Naive thymus-derived CD8-positive, alpha-beta T cell (primary cell): ENCODE measurements at regions of chr6 and their contacts with region 1.

Region 1: GRCh38 chr6:2971420-2972218 is at the start of gene SERPINB6:
- DNase-seq: peak; percentile 17 to 75 (median 40)
- ATAC-seq: peak; percentile 69 to 74
- H3K4me3 Mint-ChIP-seq: peak within 1 kb of the TSS; percentile 84 to 94 (median 92)
- H3K27ac Mint-ChIP-seq: peak within 1 kb of the TSS; percentile 87 to 97 (median 94)
- H3K4me1 Mint-ChIP-seq: peaks cover 24 to 60% (median 43%) of the 10 kb centered on the region in 4 donors
- H3K27me3 Mint-ChIP-seq: peaks cover 0 to 10% (median 0%) of the 10 kb centered on the region in 5 donors
- polyA plus RNA-seq, gene SERPINB6: 128 to 152 (median 141) TPM

Region 2: DNA sequence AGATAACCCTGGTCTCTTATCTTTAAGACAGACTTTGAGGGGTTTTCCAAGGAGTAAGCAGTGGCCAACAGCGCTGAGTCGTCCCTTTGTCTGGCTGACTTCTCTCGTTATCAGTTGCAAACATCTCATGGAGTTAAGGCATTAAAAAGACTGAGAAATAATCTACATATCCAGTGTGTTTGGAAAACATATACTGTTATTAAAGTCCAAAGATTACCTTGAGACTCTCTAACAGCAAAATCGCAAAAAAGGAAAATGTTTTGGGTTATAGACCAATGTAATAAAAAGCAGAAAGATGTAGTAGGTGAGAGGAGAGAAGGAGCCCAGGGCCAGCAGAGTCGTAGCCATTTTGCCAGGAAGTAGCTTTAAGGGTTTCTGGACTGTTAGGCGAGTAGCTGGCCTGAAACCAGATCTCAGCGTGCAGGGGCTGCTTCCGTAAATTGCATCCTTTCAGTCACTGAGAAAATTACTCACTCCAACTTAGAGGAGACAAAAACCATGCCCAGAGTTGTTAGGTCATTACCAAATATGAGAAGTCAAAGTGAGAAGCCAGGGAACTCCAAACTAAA is 245.5 kb before region 1 on chr6:
- POLR2A ChIA-PET with region 1: no interaction called
- DNase-seq: no peak
- ATAC-seq: no peak
- H3K4me3 Mint-ChIP-seq: no peak overlapping the region
- H3K27ac Mint-ChIP-seq: no peak overlapping the region
- H3K4me1 Mint-ChIP-seq: peaks cover 0 to 9% (median 1%) of the 10 kb centered on the region in 4 donors
- H3K27me3 Mint-ChIP-seq: peaks cover 1 to 19% (median 10%) of the 10 kb centered on the region in 5 donors

Region 3: DNA sequence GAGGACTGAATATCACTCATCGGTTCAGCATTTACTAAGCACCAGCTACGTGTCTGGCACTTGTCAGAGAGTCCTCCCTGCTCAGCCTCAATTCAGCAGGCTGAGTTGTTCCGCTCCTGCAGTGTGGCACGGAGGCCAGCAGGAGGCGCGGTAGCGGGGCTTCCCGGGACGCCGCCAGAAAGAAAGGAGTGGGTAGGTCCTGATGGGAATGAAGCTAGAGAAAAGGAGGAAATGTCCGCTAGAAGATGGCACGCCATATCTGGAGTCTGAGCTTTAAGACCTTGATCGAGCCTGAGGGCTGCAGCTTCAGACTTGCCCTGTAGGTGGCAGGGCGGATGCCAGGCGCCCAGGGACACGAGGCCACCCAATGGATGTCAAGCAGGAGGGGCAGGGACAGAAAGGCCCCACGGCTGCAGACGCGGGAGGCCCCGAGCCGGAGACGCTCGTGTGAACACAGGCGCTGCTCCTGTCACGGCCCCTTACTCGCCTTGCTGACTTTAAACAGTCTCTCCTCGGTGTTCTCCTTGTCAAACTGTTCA is 19.0 kb before region 1 on chr6:
- POLR2A ChIA-PET with region 1: interaction called, 12 read pairs
- DNase-seq: peak in 5 of 10 donors; percentile 30 to 63 (median 43)
- ATAC-seq: peak; percentile 67 to 94
- H3K4me3 Mint-ChIP-seq: peak overlapping the region in 5 of 10 donors; percentile 10 to 62 (median 46)
- H3K27ac Mint-ChIP-seq: peak overlapping the region in 6 of 10 donors; percentile 3 to 85 (median 40)
- H3K4me1 Mint-ChIP-seq: peaks cover 9 to 33% (median 17%) of the 10 kb centered on the region in 4 donors
- H3K27me3 Mint-ChIP-seq: no peaks in the 10 kb centered on the region

Region 4: DNA sequence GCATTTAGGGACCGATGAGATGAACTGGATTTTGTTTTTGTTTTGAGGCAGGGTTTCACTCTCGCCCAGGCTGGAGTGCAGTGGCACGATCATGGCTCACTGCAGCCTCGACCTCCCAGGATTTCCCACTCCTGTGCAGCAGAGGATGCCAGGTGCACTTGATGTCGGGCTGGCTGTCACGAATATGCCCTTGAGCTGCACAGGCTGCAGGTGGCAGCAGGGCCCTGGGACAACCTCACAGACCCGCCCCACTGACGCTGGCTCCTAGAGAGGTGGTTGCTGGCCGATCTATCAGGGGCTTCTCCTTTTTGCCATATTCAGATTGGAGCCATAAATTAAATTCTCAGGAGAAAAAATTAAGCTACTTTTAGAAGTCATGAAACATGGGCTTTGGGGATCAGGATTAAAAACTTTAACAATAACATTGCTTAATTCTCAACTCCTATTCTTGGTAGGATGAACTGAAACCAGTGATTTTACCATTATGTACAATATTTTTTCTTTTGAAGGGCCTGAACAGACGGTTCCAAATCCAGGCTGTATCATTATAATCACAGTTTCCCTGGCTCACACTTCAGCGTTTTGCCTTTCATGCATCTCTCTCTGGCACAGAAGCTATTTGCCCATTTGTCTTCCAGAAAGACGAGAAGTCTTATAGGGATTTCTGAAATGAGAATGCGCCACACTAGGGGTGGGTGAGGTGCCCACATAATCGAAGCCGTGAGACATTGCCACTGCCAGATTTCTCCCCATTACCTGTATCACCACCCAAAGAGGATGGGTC is 60.4 kb after region 1 on chr6:
- POLR2A ChIA-PET with region 1: no interaction called
- DNase-seq: peak in 1 of 10 donors; percentile 35
- ATAC-seq: peak; percentile 50 to 54
- H3K4me3 Mint-ChIP-seq: no peak overlapping the region
- H3K27ac Mint-ChIP-seq: peak overlapping the region in 1 of 10 donors; percentile 28
- H3K4me1 Mint-ChIP-seq: peaks cover 5 to 21% (median 14%) of the 10 kb centered on the region in 4 donors
- H3K27me3 Mint-ChIP-seq: peaks cover 0 to 14% (median 3%) of the 10 kb centered on the region in 5 donors